Activated CD4-positive, alpha-beta memory T cell treated with anti-CD3 and anti-CD28 coated beads for 36 hours (primary cell): ENCODE measurements at regions of chr14 and their contacts with region 1.

Region 1: GRCh38 chr14:71414631-71415403 is 507.6 kb downstream of the PCNX1 start:
- DNase-seq: no peak
- H3K4me3 Mint-ChIP-seq: no peak overlapping the region
- H3K27ac Mint-ChIP-seq: no peak overlapping the region
- H3K4me1 Mint-ChIP-seq: peaks cover 30% of the 10 kb centered on the region
- H3K27me3 Mint-ChIP-seq: no peaks in the 10 kb centered on the region

Region 2: DNA sequence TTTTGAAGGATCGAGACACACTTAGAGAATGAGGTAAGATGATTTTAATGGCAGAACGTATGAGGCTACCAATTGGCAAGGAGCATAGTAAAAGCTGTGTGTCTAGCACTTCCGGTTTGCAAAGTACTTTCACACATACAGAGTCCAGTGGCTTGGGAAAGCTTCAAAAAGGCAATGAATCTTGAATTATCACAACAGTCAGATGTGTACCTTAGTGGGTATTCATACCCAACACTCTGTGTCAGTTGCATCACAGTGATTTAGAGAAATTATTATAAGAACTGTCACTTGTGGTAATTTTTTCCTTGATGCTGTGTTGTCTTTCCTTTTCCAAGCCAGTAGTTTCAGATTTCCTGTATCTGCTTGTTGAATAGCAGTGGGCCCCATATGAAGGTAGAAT is 83.4 kb before region 1 on chr14:
- CTCF ChIA-PET with region 1: no interaction called
- POLR2A ChIA-PET with region 1: no interaction called
- intact Hi-C with region 1: loop called (anchors 2 kb)
- DNase-seq: no peak
- H3K4me3 Mint-ChIP-seq: no peak overlapping the region
- H3K27ac Mint-ChIP-seq: peak overlapping the region; percentile 44
- H3K4me1 Mint-ChIP-seq: peaks cover 59% of the 10 kb centered on the region
- H3K27me3 Mint-ChIP-seq: no peaks in the 10 kb centered on the region

Region 3: DNA sequence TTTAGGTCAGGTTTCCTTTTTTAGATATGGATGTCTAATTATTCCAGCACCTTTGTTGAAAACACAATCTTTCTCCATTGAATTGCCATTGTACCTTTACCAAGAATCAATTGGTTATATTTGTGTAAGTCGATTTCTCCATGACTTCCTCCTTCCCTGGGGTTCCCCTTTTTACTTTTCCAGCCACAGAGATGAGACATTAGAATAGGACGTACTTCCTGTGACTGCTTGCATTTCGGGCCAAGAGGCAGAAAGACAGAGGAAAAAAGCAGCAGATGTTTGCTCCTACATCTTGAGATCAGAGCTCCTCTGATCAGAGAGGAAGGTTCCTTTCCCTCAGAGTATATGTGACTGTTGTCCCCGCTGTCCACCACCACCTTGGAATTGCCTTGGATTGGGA is 63.7 kb after region 1 on chr14:
- CTCF ChIA-PET with region 1: no interaction called
- POLR2A ChIA-PET with region 1: no interaction called
- intact Hi-C with region 1: loop called (anchors 5 kb)
- DNase-seq: peak; percentile 13
- H3K4me3 Mint-ChIP-seq: no peak overlapping the region
- H3K27ac Mint-ChIP-seq: peak overlapping the region; percentile 4
- H3K4me1 Mint-ChIP-seq: peaks cover 26% of the 10 kb centered on the region
- H3K27me3 Mint-ChIP-seq: no peaks in the 10 kb centered on the region